ENCODE measurements at regions of chr18 and their contacts with region 1.

Region 1: DNA sequence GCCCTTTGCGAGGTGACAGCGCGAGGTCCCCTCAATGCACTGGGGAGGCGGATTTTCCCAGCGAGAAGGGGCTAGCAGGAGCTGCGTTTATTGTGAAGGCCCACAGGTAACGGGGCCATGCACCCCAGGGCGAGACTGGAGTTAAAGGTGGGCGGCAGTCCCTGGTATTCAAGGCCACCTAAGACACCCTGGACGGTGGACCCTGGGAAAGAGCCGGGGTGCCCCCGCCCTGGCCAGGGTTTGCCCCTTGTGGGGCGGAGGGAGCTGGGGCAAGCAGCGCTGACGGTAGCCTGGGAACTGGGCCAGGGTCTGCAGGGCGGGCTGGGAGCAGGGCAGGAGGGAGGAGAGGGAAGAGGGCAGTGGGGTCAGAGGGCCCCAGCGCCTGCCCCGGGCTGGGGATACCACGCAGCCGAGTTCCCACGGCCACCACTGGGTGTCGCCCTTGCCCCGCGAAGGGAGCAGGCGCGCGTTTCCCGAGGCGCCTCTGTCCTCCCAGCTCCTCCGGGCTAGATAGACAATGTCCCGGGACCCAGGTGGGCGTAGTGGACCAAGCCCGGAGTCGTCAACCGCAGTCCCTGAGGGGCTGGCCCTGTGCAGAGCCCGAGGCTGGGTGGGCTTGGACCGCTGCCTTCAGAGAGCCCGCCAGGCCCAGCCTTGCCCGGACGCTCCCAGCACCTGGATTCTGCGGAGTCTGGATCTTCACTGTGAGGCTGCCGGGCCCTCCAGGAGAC is 80.2 kb downstream of the SMAD4 start:
- DNase-seq: peak; percentile 51
- H3K4me3 Mint-ChIP-seq: no peak overlapping the region
- H3K27ac Mint-ChIP-seq: no peak overlapping the region
- H3K4me1 Mint-ChIP-seq: peaks cover 18% of the 10 kb centered on the region
- H3K27me3 Mint-ChIP-seq: no peaks in the 10 kb centered on the region

Region 2: DNA sequence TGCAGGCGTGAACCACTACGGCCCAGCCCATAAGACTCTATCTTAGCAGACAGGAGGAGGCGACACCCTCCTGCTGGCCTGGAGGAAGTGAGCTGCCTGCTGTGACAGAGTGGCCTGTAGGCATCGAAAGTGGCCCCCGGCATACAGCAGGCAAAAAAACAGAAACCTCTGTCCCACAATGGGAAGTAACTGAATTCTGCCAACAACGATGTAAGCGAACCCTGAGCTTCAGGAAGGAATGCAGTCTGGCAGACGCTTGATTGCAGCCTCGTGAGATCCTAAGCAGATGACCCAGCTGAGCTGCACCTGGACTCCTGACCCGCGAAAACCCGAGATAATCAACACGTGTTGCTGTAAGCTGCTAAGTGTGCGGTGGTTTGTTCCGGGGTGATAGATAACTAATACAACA is 304.0 kb before region 1 on chr18:
- intact Hi-C with region 1: no loop called
- DNase-seq: no peak
- H3K4me3 Mint-ChIP-seq: no peak overlapping the region
- H3K27ac Mint-ChIP-seq: no peak overlapping the region
- H3K4me1 Mint-ChIP-seq: no peaks in the 10 kb centered on the region
- H3K27me3 Mint-ChIP-seq: peaks cover 3% of the 10 kb centered on the region

Region 3: DNA sequence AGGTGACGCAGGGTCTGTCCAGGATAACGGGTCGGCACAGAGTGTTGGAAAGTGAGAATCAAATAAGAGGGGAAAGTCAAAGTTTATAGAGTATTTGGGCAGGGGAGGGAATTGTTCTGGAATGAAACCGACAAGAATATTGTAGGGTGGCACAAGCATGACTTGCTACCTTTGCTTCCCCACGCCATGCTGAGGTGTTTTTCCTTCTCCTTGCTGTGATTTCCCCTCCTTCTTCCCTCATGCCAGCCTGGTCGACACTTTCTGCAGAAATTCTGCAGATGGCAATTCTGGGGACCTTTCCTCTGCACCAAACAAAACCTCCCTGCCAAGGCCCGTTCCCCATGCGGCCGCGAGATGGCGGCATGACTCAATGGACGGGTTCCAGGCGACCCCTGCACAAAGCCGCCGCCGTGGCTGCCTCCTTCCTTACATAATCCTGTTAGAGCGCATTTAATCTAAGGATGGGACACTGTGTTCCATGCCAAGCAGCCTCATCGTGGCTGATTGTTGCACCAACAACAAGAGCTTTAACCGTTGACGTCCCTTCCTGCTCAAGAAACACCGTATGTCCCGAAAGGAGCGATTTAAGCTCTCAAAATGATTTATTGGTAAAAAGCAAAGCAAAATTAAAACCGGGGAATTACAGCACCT is 290.4 kb before region 1 on chr18 and contains the start of gene MRO:
- intact Hi-C with region 1: loop called (anchors 5 kb)
- DNase-seq: peak; percentile 66
- H3K4me3 Mint-ChIP-seq: no peak within 1 kb of the TSS
- H3K27ac Mint-ChIP-seq: no peak within 1 kb of the TSS
- H3K4me1 Mint-ChIP-seq: no peaks in the 10 kb centered on the region
- H3K27me3 Mint-ChIP-seq: peaks cover 19% of the 10 kb centered on the region
- total RNA-seq, gene MRO: not detected in 2 replicates

Region 4: GRCh38 chr18:51153659-51154371 is 43.6 kb after region 1 on chr18:
- intact Hi-C with region 1: loop called (anchors 5 kb)
- DNase-seq: peak; percentile 30
- H3K4me3 Mint-ChIP-seq: peak overlapping the region; percentile 76
- H3K27ac Mint-ChIP-seq: peak overlapping the region; percentile 96
- H3K4me1 Mint-ChIP-seq: peaks cover 48% of the 10 kb centered on the region
- H3K27me3 Mint-ChIP-seq: no peaks in the 10 kb centered on the region

Region 5: DNA sequence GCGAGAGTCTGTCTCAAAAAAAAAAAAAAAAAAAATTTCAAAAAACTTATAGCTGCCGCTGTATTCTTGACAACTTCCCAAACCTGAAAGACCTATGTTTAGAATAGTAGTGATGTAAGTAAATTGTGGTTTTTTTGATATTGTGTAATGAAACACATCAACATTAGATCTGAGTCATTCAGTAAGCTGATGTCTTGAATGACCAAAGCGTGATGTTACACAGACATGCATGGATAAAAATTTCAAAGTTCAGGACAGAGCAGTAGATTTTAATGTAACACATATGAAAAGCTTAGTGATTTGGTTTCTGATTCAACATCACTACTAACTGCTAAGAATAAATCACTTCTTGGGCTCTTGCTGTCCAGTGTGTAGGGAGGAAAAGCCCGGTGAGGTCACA is 156.5 kb after region 1 on chr18:
- intact Hi-C with region 1: no loop called
- DNase-seq: no peak
- H3K4me3 Mint-ChIP-seq: no peak overlapping the region
- H3K27ac Mint-ChIP-seq: no peak overlapping the region
- H3K4me1 Mint-ChIP-seq: no peaks in the 10 kb centered on the region
- H3K27me3 Mint-ChIP-seq: peaks cover 3% of the 10 kb centered on the region

Region 6: GRCh38 chr18:52288403-52289004 is 1178.3 kb after region 1 on chr18:
- intact Hi-C with region 1: loop called (anchors 5 kb)
- DNase-seq: no peak
- H3K4me3 Mint-ChIP-seq: no peak overlapping the region
- H3K27ac Mint-ChIP-seq: no peak overlapping the region
- H3K4me1 Mint-ChIP-seq: no peaks in the 10 kb centered on the region
- H3K27me3 Mint-ChIP-seq: no peaks in the 10 kb centered on the region

Region 7: GRCh38 chr18:52700816-52701215 is 1590.6 kb after region 1 on chr18:
- intact Hi-C with region 1: no loop called
- DNase-seq: no peak
- H3K4me3 Mint-ChIP-seq: no peak overlapping the region
- H3K27ac Mint-ChIP-seq: no peak overlapping the region
- H3K4me1 Mint-ChIP-seq: no peaks in the 10 kb centered on the region
- H3K27me3 Mint-ChIP-seq: no peaks in the 10 kb centered on the region